CD8-positive, alpha-beta T cell (primary cell): ENCODE measurements at regions of chr18 and their contacts with region 1.

Region 1: GRCh38 chr18:50878345-50879301 is at the start of gene ME2:
- DNase-seq: peak; percentile 80 to 94 (median 91)
- ATAC-seq: peak; percentile 87
- H3K4me3 ChIP-seq: peak within 1 kb of the TSS; percentile 87 to 95
- H3K4me3 Mint-ChIP-seq: peak within 1 kb of the TSS; percentile 96
- H3K27ac ChIP-seq: peak within 1 kb of the TSS; percentile 89 to 99
- H3K27ac Mint-ChIP-seq: peak within 1 kb of the TSS; percentile 99
- H3K4me1 ChIP-seq: peaks cover 31% of the 10 kb centered on the region
- H3K4me1 Mint-ChIP-seq: peaks cover 37% of the 10 kb centered on the region
- H3K27me3 ChIP-seq: no peaks in the 10 kb centered on the region
- H3K27me3 Mint-ChIP-seq: no peaks in the 10 kb centered on the region
- CTCF ChIP-seq: no peak
- total RNA-seq, gene ME2: 14.4 to 17.3 TPM

Region 2: GRCh38 chr18:49486953-49487710 is 1391.5 kb before region 1 on chr18 and contains the start of gene C18orf32:
- CTCF ChIA-PET with region 1: no interaction called
- POLR2A ChIA-PET with region 1: no interaction called
- intact Hi-C with region 1: loop called in 1 of 2 experiments (anchors 5 kb)
- DNase-seq: peak; percentile 87 to 97 (median 95)
- ATAC-seq: peak; percentile 85
- H3K4me3 ChIP-seq: peak within 1 kb of the TSS; percentile 76 to 80
- H3K4me3 Mint-ChIP-seq: peak within 1 kb of the TSS; percentile 97
- H3K27ac ChIP-seq: peak within 1 kb of the TSS; percentile 84 to 90
- H3K27ac Mint-ChIP-seq: peak within 1 kb of the TSS; percentile 98
- H3K4me1 ChIP-seq: peaks cover 49% of the 10 kb centered on the region
- H3K4me1 Mint-ChIP-seq: peaks cover 70% of the 10 kb centered on the region
- H3K27me3 ChIP-seq: no peaks in the 10 kb centered on the region
- H3K27me3 Mint-ChIP-seq: no peaks in the 10 kb centered on the region
- CTCF ChIP-seq: no peak
- total RNA-seq, gene C18orf32: 40.9 to 44.1 TPM

Region 3: GRCh38 chr18:50281295-50281971 is 597.2 kb before region 1 on chr18 and contains the start of gene MBD1:
- CTCF ChIA-PET with region 1: no interaction called
- POLR2A ChIA-PET with region 1: no interaction called
- intact Hi-C with region 1: loop called in 1 of 2 experiments (anchors 10 kb)
- DNase-seq: peak; percentile 93 to 99 (median 97)
- ATAC-seq: peak; percentile 92
- H3K4me3 ChIP-seq: peak within 1 kb of the TSS; percentile 80 to 90
- H3K4me3 Mint-ChIP-seq: peak within 1 kb of the TSS; percentile 98
- H3K27ac ChIP-seq: peak within 1 kb of the TSS; percentile 81 to 90
- H3K27ac Mint-ChIP-seq: peak within 1 kb of the TSS; percentile 96
- H3K4me1 ChIP-seq: peaks cover 38% of the 10 kb centered on the region
- H3K4me1 Mint-ChIP-seq: peaks cover 49% of the 10 kb centered on the region
- H3K27me3 ChIP-seq: no peaks in the 10 kb centered on the region
- H3K27me3 Mint-ChIP-seq: no peaks in the 10 kb centered on the region
- CTCF ChIP-seq: no peak
- total RNA-seq, gene MBD1: 88.5 to 96.0 TPM

Region 4: DNA sequence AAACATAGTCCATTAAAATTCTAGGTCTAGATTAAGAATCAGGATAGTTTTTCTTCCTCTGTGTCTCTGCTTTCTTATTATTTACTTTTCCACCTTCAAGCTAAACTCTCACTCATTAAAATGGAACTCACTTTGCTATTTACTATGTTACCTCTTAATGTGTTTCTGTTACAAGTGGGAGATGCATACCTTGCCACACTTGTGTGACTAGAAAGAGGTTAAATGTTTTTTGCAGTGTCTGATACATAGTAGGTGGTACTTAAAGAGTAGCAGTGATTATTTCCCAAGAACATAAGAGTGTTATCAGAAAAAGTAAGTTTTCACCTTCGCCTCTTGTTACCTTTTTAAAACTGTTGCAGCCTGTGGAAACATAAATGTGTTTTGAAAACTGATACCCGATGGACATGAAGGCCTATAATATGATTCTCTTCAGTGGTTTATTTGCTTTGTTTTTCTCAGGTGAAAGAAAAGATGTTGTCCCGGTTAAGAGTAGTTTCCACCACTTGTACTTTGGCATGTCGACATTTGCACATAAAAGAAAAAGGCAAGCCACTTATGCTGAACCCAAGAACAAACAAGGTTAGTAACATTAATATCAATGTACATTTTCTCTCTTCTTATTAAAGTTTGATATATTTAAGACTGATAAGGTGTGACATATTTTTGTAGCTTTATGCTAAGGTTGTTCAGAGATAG is 16.9 kb after region 1 on chr18:
- CTCF ChIA-PET with region 1: no interaction called
- POLR2A ChIA-PET with region 1: interaction called, 10 read pairs
- intact Hi-C with region 1: no loop called
- DNase-seq: no peak
- ATAC-seq: no peak
- H3K4me3 ChIP-seq: no peak overlapping the region
- H3K4me3 Mint-ChIP-seq: no peak overlapping the region
- H3K27ac ChIP-seq: no peak overlapping the region
- H3K27ac Mint-ChIP-seq: peak overlapping the region; percentile 79
- H3K4me1 ChIP-seq: no peaks in the 10 kb centered on the region
- H3K4me1 Mint-ChIP-seq: peaks cover 24% of the 10 kb centered on the region
- H3K27me3 ChIP-seq: no peaks in the 10 kb centered on the region
- H3K27me3 Mint-ChIP-seq: no peaks in the 10 kb centered on the region
- CTCF ChIP-seq: no peak

Region 5: GRCh38 chr18:51029694-51030536 is 151.3 kb after region 1 on chr18 and contains the start of gene SMAD4:
- CTCF ChIA-PET with region 1: no interaction called
- POLR2A ChIA-PET with region 1: interaction called, 35 read pairs
- intact Hi-C with region 1: loop called (anchors 1 to 2 kb)
- DNase-seq: peak; percentile 94 to 99 (median 98)
- ATAC-seq: peak; percentile 83
- H3K4me3 ChIP-seq: peak within 1 kb of the TSS; percentile 74 to 80
- H3K4me3 Mint-ChIP-seq: peak within 1 kb of the TSS; percentile 97
- H3K27ac ChIP-seq: peak within 1 kb of the TSS; percentile 81 to 91
- H3K27ac Mint-ChIP-seq: peak within 1 kb of the TSS; percentile 99
- H3K4me1 ChIP-seq: peaks cover 41% of the 10 kb centered on the region
- H3K4me1 Mint-ChIP-seq: peaks cover 65% of the 10 kb centered on the region
- H3K27me3 ChIP-seq: no peaks in the 10 kb centered on the region
- H3K27me3 Mint-ChIP-seq: no peaks in the 10 kb centered on the region
- CTCF ChIP-seq: no peak
- total RNA-seq, gene SMAD4: 80.4 to 86.5 TPM

Region 6: DNA sequence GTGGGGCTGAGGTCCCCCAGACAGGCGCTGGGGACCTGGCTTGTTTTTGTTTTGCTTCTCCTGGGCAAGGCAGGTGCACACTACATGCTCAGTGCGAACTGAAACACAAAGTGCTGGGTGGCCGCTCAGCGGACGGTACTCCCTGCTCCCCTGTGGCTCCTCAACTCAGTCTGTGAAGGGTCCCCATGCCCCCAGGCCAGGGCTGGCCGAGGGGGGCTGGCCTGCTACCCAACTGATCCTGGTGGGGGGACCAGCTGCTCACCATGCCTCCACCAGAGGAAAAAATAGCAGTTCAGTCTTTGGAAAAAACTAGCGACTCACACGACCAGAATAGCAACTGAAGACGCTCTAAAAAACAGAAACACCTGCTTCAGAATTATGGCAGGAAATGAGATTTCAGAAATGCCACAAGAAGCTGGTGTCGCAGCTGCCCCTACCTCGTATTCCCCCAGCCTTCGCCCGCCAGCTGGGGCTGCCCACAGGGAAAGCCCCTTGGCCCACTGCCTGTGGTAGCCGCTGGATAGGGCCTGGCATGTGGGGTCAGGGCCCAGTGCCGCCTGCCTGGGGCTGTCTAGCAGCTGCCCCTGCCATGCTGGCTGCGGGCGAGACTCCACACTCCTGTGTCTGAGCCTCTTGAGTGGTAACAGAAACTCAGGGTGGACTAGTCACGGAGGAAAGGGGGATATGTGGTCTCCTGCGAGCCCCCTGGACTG is 275.2 kb after region 1 on chr18:
- CTCF ChIA-PET with region 1: no interaction called
- POLR2A ChIA-PET with region 1: interaction called, 3 read pairs
- intact Hi-C with region 1: loop called in 1 of 2 experiments (anchors 1 kb)
- DNase-seq: peak in 8 of 9 experiments; percentile 33 to 81 (median 54)
- ATAC-seq: peak; percentile 46
- H3K4me3 ChIP-seq: peak overlapping the region; percentile 40 to 49
- H3K4me3 Mint-ChIP-seq: peak overlapping the region; percentile 82
- H3K27ac ChIP-seq: peak overlapping the region; percentile 19 to 71
- H3K27ac Mint-ChIP-seq: peak overlapping the region; percentile 93
- H3K4me1 ChIP-seq: peaks cover 34% of the 10 kb centered on the region
- H3K4me1 Mint-ChIP-seq: peaks cover 33% of the 10 kb centered on the region
- H3K27me3 ChIP-seq: no peaks in the 10 kb centered on the region
- H3K27me3 Mint-ChIP-seq: no peaks in the 10 kb centered on the region
- CTCF ChIP-seq: no peak